Gastrocnemius medialis (tissue), 4 donors: ENCODE measurements at regions of chr2 and their contacts with region 1.

Region 1: DNA sequence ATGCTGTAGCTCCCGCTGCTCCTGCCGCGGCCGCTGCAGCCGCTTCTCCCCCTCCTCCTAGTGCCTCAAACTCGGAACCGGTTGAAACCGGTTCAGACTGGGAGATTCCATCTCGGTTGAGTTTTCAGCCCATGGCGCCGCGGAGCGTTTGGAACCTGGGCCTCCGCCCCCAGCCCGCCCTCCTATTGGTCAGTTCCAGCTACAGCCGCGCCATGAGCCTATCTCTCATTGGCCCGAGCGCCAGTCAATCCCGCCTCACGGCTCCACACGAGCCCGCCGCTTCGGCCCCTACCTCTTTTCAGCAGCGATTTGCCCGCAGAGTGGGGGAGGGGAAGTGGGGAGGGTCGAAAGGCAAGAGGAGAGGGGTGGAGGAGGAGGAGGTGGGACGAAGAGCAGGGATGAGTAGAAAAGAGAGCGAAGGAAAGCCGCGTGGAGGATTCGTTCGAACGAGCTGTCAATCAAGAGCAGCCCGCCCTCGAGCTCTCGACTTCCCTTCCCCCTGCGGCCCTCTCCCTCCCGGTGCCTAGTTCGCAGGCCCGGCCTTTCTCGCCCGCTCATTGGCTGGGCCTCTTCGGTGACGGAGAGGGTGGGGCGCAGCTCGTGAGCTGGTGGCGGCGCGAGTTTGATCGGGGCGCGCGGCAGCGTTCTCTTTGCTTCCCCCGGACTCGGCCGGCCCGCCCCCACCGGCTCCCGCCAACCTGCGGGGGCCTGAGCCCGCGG is at the start of gene XPO1:
- DNase-seq: peak; percentile 99
- ATAC-seq: peak; percentile 80 to 82
- H3K4me3 ChIP-seq: peak within 1 kb of the TSS; percentile 73 to 94 (median 82)
- H3K27ac ChIP-seq: peak within 1 kb of the TSS; percentile 97 to 99 (median 99)
- H3K4me1 ChIP-seq: peaks cover 29 to 30% of the 10 kb centered on the region in 2 donors
- H3K27me3 ChIP-seq: no peaks in the 10 kb centered on the region
- CTCF ChIP-seq: peak in 2 of 5 experiments; percentile 6 to 10
- POLR2A ChIP-seq: peak; percentile 90 to 91
- total RNA-seq, gene XPO1: 34.3 to 69.1 (median 56.3) TPM

Region 2: DNA sequence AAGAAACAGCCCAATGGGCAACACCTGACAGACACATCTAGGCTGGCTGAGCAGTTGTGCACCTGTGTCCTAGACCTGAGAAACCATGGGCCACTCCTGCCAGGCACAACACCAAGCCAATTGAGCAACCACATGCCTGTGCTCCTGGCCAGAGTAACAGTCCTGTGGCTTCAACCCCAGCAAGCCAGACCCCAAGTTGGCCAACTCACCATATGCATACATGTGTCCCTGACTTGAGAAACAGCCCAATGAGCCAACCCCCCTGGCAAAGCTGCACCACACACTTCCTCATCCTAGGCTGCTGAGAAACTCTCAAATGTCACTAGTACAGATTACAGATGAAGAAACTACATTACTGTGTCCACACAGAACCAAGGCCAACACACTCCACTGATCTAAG is 104.0 kb before region 1 on chr2:
- in situ Hi-C with region 1: no loop called
- intact Hi-C with region 1: loop called (anchors 5 kb)
- DNase-seq: peak; percentile 79 to 97
- ATAC-seq: peak; percentile 72 to 88
- H3K4me3 ChIP-seq: no peak overlapping the region
- H3K27ac ChIP-seq: peak overlapping the region; percentile 83 to 86 (median 85)
- H3K4me1 ChIP-seq: peaks cover 53 to 59% of the 10 kb centered on the region in 2 donors
- H3K27me3 ChIP-seq: no peaks in the 10 kb centered on the region
- CTCF ChIP-seq: no peak
- POLR2A ChIP-seq: no peak

Region 3: GRCh38 chr2:61575447-61575859 is 37.1 kb after region 1 on chr2:
- in situ Hi-C with region 1: no loop called
- intact Hi-C with region 1: no loop called
- DNase-seq: no peak
- ATAC-seq: no peak
- H3K4me3 ChIP-seq: no peak overlapping the region
- H3K27ac ChIP-seq: no peak overlapping the region
- H3K4me1 ChIP-seq: no peaks in the 10 kb centered on the region
- H3K27me3 ChIP-seq: no peaks in the 10 kb centered on the region
- CTCF ChIP-seq: no peak
- POLR2A ChIP-seq: no peak

Region 4: GRCh38 chr2:61597300-61598289 is 59.2 kb after region 1 on chr2:
- in situ Hi-C with region 1: no loop called
- intact Hi-C with region 1: no loop called
- DNase-seq: no peak
- ATAC-seq: no peak
- H3K4me3 ChIP-seq: no peak overlapping the region
- H3K27ac ChIP-seq: no peak overlapping the region
- H3K4me1 ChIP-seq: no peaks in the 10 kb centered on the region
- H3K27me3 ChIP-seq: no peaks in the 10 kb centered on the region
- CTCF ChIP-seq: no peak
- POLR2A ChIP-seq: no peak

Region 5: DNA sequence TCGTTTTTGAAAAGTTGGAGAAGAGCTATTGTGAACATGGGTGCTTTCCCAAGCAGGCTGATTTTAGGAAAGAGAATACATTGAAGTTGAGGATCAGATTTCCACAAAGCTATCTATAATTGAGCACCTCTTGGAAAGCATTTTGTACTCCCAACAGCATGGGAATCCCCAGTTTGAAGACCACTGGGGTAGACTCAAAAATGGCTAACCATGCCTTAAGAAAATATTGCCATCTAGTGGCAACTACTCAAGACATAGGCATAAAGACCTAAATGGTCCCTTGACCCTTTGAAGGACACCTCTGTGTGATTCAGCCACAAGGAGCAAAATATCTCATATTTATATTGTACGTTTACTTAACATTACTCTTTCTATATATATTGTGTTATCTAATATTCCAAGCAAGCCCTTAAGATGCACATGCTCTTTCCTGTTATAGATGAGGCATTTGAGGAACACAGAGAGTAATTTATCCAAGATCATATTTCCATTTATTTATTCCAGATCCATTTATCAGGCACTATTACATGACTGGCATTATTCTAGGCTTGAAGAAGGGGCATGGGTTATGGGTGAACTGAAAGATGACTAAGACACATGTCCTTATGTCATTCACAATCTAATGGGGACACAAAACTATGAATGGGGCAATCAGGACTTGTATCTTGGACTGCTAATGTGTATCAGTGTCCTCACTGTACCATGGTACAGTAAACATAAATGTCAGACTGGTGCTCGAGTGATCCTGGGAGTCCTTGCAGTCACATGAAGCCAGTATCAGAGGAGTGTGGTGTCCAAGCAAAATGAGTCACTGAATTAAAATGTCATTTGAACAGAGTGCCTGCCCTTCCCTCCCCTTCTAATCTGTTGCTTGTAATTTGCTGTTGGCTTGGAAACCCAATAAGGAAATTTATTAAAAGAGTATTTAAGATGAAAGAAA is 120.8 kb after region 1 on chr2:
- in situ Hi-C with region 1: no loop called
- intact Hi-C with region 1: loop called (anchors 1 kb)
- DNase-seq: peak; percentile 69 to 74
- ATAC-seq: peak; percentile 94 to 97
- H3K4me3 ChIP-seq: no peak overlapping the region
- H3K27ac ChIP-seq: peak overlapping the region; percentile 80 to 92 (median 88)
- H3K4me1 ChIP-seq: peaks cover 22 to 24% of the 10 kb centered on the region in 2 donors
- H3K27me3 ChIP-seq: no peaks in the 10 kb centered on the region
- CTCF ChIP-seq: peak in 4 of 5 experiments; percentile 21 to 51 (median 38)
- POLR2A ChIP-seq: no peak

Region 6: GRCh38 chr2:61694312-61695274 is 156.2 kb after region 1 on chr2:
- in situ Hi-C with region 1: loop called in 1 of 4 experiments (anchors 10 kb)
- intact Hi-C with region 1: no loop called
- DNase-seq: peak; percentile 93 to 94
- ATAC-seq: peak; percentile 90 to 91
- H3K4me3 ChIP-seq: peak overlapping the region; percentile 86 to 99 (median 94)
- H3K27ac ChIP-seq: peak overlapping the region; percentile 95 to 99 (median 97)
- H3K4me1 ChIP-seq: peaks cover 10 to 11% of the 10 kb centered on the region in 2 donors
- H3K27me3 ChIP-seq: no peaks in the 10 kb centered on the region
- CTCF ChIP-seq: peak; percentile 50 to 75 (median 61)
- POLR2A ChIP-seq: peak; percentile 43 to 68

Region 7: GRCh38 chr2:61854474-61855182 is 316.3 kb after region 1 on chr2:
- in situ Hi-C with region 1: no loop called
- intact Hi-C with region 1: loop called (anchors 2 kb)
- DNase-seq: peak; percentile 90 to 93
- ATAC-seq: peak; percentile 97 to 98
- H3K4me3 ChIP-seq: peak overlapping the region; percentile 80 to 89 (median 82)
- H3K27ac ChIP-seq: peak overlapping the region; percentile 89 to 93 (median 90)
- H3K4me1 ChIP-seq: peaks cover 8 to 13% of the 10 kb centered on the region in 2 donors
- H3K27me3 ChIP-seq: no peaks in the 10 kb centered on the region
- CTCF ChIP-seq: no peak
- POLR2A ChIP-seq: no peak